BJ (cell line): ENCODE measurements at regions of chr4 and their contacts with region 1.

Region 1: DNA sequence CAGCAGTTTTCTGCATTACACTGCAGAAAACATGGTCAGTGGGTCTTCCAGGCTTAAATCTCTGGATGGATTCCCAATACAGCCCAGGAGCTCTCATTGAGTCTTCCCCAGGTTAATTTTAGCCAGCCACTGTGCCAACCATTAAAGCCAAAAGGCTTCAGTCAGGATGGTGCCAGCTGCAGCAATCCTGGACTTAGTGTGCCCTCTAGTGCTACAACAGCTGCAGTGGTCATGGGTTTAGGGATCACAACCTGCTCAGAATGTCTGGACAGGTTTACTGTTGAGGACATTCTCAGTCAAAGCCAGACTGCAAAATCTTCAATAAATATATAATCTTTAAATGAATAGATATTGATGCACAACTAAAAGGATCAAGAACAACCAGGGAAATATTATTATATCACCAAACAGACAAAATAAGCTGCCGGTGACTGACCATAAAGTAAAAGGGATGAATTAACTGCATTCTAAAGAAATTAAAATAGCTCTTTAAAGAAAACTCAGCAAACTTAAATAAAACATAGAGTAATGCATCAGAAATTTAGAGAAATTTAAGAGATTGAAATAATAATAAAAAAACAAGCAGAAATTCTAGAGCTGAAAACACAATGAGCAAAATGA is 639.9 kb downstream of the SPOCK3 start:
- DNase-seq: no peak
- H3K4me3 ChIP-seq: no peak overlapping the region
- H3K27me3 ChIP-seq: no peaks in the 10 kb centered on the region; the same call in 1 of the 2 replicates
- CTCF ChIP-seq: peak; percentile 70

Region 2: GRCh38 chr4:166165829-166166420 is 428.5 kb before region 1 on chr4:
- CTCF ChIA-PET with region 1: interaction called, 36 read pairs
- POLR2A ChIA-PET with region 1: no interaction called
- DNase-seq: peak; percentile 22
- H3K4me3 ChIP-seq: no peak overlapping the region
- H3K27me3 ChIP-seq: no peaks in the 10 kb centered on the region
- CTCF ChIP-seq: peak; percentile 72

Region 3: GRCh38 chr4:167000141-167000852 is 405.9 kb after region 1 on chr4:
- CTCF ChIA-PET with region 1: no interaction called
- POLR2A ChIA-PET with region 1: no interaction called
- DNase-seq: no peak
- H3K4me3 ChIP-seq: no peak overlapping the region
- H3K27me3 ChIP-seq: no peaks in the 10 kb centered on the region
- CTCF ChIP-seq: no peak